Activated naive CD4-positive, alpha-beta T cell treated with anti-CD3 and anti-CD28 coated beads for 36 hours (primary cell): ENCODE measurements at regions of chr15 and their contacts with region 1.

Region 1: DNA sequence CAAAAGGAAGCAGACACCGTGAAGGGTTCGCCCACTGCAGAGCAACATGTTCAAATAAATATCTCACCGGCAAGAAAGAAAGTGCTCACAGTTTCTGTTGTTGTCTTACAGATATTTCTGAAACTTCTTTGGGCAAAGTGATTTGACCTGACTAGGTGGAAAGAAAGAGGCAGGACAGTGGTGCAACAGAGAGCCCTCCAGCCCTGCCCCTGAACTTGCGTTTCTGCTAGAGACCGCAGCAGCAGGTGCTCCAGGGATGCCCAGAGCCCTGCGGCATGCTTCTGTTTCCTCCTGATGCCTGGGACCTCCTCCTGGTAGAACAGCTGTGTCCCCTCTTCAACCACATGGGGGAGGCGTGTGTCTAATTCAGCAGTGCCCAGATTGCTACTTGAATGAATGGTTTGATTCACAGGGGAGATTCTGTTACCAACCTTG is 123.4 kb downstream of the ATP10A start:
- DNase-seq: peak; percentile 66
- H3K4me3 Mint-ChIP-seq: no peak overlapping the region
- H3K27ac Mint-ChIP-seq: no peak overlapping the region
- H3K4me1 Mint-ChIP-seq: peaks cover 19% of the 10 kb centered on the region
- H3K27me3 Mint-ChIP-seq: no peaks in the 10 kb centered on the region

Region 2: DNA sequence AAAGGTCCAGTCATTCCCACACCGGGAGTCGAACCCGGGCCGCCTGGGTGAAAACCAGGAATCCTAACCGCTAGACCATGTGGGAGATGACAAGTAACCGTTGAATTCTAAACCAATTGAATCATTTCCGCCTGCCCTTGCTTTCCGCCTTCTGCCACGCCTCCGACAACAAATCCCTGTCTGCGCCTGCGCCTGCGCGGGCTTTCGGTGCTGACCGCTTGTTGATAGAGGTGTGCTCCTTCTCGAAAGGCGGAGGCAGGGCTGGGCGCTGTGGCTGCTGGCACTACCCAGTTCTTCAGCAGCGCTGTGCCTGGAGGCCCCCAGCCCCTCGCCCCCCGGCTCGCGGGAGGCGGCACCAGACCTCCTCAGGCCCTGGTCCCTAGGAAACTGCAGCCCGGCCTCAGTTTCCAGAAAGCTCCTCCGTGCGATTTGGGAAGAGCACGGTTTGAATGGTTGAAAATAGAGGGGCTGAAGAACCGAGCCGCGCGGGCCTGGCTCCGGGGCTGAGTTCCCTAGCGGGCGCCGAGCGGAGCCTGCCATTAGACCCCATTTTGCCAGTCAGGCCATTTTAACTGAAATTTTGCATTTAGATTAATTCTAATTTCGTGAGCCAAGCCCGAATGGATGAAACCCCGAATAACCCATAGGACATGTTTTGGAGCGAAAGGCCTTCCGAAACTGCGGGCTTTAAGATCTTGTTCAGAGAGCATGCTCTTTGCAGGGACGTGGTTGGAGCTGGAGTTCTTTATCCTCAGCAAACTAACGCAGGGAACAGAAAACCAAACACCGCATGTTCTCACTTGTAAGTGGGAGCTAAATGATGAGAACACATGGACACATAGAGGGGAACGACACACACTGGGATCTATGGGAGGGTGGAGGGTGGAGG is 342.8 kb after region 1 on chr15:
- CTCF ChIA-PET with region 1: no interaction called
- intact Hi-C with region 1: loop called (anchors 5 kb)
- DNase-seq: peak; percentile 96
- H3K4me3 Mint-ChIP-seq: peak overlapping the region; percentile 83
- H3K27ac Mint-ChIP-seq: peak overlapping the region; percentile 92
- H3K4me1 Mint-ChIP-seq: peaks cover 29% of the 10 kb centered on the region
- H3K27me3 Mint-ChIP-seq: peaks cover 2% of the 10 kb centered on the region